PC-9 (cell line): ENCODE measurements at regions of chr21 and their contacts with region 1.

Region 1: DNA sequence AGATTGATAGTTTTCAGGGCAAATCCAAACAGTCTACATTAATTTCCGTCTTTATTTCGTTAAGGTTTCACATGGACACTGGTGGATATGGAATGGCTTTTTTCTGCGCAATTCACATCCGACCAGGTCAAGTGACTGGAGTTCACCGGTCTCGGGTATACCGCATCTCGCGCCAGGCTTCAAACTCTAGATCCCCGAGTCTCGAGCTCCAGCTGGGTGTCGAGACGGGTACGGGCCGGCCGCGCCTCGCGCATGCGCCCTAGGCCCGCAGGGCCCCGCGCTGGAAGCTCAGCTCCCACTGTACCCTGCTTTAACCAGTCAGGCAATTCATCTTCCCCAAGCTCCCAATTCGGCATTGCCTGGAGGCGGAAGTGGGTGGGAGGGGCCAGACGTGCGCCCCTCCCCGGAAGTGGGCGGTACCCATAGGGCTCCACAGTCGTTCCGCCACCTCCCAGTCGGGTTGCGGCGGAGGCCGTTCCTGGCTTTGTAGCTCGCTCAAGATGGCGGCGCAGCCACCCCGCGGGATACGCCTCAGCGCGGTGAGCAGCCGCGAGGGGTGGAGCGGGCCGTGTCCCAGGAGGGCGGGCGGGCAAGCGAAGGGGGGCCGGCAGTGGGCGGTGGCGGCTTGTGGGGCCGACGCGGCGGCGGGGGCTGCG is at the start of gene MORC3:
- DNase-seq: peak; percentile 94 to 96
- H3K4me3 ChIP-seq: peak within 1 kb of the TSS; percentile 63
- H3K27ac ChIP-seq: peak within 1 kb of the TSS; percentile 65
- H3K4me1 ChIP-seq: peaks cover 7% of the 10 kb centered on the region; the same call in 1 of the 2 replicates
- H3K27me3 ChIP-seq: no peaks in the 10 kb centered on the region
- CTCF ChIP-seq: no peak
- total RNA-seq, gene MORC3: 15.9 and 17.5 TPM in 2 replicates

Region 2: DNA sequence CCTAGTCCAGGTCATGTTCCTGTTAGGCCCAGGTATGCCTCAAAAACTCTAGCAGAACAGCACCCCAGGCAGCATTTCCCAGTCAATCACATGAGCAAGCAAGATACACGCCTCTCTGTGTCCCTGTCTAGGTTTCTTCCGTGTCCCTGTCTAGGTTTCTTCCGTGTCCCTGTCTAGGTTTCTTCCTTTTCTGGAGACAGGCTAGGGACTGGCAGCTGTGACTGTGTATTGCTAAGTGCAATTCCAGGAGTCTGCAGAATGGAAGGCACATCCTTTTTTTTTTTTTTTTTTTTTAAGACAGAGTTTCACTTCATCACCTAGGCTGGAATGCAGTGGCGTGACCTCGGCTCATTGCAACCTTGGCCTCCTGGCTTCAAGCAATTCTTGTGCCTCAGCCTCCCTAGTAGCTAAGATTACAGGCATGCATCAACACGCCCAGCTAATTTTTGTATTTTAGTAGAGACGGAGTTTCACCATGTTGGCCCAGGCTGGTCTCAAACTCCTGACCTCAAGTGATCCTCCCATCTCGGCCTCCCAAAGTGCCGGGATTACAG is 337.1 kb before region 1 on chr21:
- CTCF ChIA-PET with region 1: no interaction called
- POLR2A ChIA-PET with region 1: interaction called, 14 read pairs
- intact Hi-C with region 1: no loop called
- DNase-seq: no peak
- H3K4me3 ChIP-seq: no peak overlapping the region
- H3K27ac ChIP-seq: no peak overlapping the region
- H3K4me1 ChIP-seq: no peaks in the 10 kb centered on the region
- H3K27me3 ChIP-seq: 0 out of 2 replicates have a peak, but pooled peaks cover 4% of the 10 kb centered on the region
- CTCF ChIP-seq: no peak

Region 3: DNA sequence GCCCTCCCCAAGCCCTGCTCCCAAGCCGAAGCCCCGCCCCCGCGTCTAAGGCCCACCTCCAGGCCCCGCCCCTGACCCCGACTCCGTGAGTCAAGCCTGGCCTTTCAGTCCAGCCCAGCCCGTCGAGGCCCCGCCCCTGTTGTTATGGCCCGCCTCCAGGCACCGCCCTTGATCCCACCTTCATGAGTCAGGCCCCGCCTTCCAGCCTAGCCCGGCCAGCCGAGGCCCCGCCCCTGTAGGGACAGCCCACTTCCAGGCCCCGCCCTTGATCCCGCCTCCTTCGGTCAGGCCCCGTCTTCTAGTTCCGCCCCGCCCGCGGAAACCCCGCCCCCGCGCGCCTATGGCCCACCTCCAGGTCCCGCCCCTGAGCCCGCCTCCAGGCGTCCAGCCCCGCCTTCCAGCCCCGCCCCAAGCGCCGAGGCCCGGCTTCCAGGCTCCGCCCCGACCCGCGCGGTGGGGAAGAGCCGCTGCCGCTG is 163.5 kb before region 1 on chr21:
- CTCF ChIA-PET with region 1: no interaction called
- POLR2A ChIA-PET with region 1: interaction called, 5 read pairs
- intact Hi-C with region 1: loop called (anchors 1 kb)
- DNase-seq: peak; percentile 83 to 97
- H3K4me3 ChIP-seq: peak overlapping the region; percentile 69
- H3K27ac ChIP-seq: peak overlapping the region; percentile 63; the same call in 1 of the 2 replicates
- H3K4me1 ChIP-seq: peaks cover 15% of the 10 kb centered on the region
- H3K27me3 ChIP-seq: no peaks in the 10 kb centered on the region
- CTCF ChIP-seq: no peak

Region 4: DNA sequence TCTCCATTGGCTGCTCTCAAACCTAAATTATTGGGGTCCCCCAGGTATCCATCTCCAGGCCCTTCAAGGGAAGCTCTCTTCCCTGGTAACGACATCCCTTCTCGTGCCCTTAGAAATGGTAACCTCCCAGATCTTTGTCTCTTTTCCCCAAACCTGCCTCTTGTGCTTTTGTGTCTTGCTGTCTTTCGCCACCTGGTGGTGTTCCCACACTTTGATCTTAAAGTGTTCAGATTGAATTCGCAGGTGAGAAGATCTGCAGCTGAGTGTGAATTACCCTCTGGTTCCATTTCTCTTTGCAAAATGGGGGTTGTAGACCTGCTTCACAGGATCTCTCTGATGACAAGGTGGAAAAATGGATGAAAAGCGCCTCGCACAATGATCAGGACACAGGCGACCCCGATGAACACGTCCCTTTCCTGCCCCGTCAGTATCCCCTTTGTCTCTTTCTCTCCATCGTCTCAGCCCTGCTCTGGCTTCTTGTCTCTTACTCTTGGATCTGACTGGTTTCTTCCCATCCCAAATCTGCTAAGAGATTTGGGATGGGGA is 110.2 kb before region 1 on chr21:
- CTCF ChIA-PET with region 1: interaction called, 15 read pairs
- POLR2A ChIA-PET with region 1: interaction called, 3 read pairs
- intact Hi-C with region 1: loop called (anchors 5 kb)
- DNase-seq: peak; percentile 52 to 71
- H3K4me3 ChIP-seq: peak overlapping the region; percentile 38; the same call in 1 of the 2 replicates
- H3K27ac ChIP-seq: peak overlapping the region; percentile 82
- H3K4me1 ChIP-seq: peaks cover 49% of the 10 kb centered on the region
- H3K27me3 ChIP-seq: no peaks in the 10 kb centered on the region
- CTCF ChIP-seq: peak; percentile 82

Region 5: GRCh38 chr21:36297921-36298594 is 21.8 kb before region 1 on chr21:
- CTCF ChIA-PET with region 1: interaction called, 5 read pairs
- POLR2A ChIA-PET with region 1: interaction called, 16 read pairs
- intact Hi-C with region 1: no loop called
- DNase-seq: peak; percentile 55 to 69
- H3K4me3 ChIP-seq: no peak overlapping the region
- H3K27ac ChIP-seq: peak overlapping the region; percentile 56
- H3K4me1 ChIP-seq: peaks cover 9% of the 10 kb centered on the region; the same call in 1 of the 2 replicates
- H3K27me3 ChIP-seq: no peaks in the 10 kb centered on the region
- CTCF ChIP-seq: no peak

Region 6: GRCh38 chr21:37410639-37411038 is 1090.7 kb after region 1 on chr21:
- CTCF ChIA-PET with region 1: no interaction called
- POLR2A ChIA-PET with region 1: interaction called, 11 read pairs
- intact Hi-C with region 1: no loop called
- DNase-seq: no peak
- H3K4me3 ChIP-seq: no peak overlapping the region
- H3K27ac ChIP-seq: no peak overlapping the region
- H3K4me1 ChIP-seq: no peaks in the 10 kb centered on the region
- H3K27me3 ChIP-seq: no peaks in the 10 kb centered on the region
- CTCF ChIP-seq: no peak